ENCODE measurements at regions of chr17 and their contacts with region 1.

Region 1: DNA sequence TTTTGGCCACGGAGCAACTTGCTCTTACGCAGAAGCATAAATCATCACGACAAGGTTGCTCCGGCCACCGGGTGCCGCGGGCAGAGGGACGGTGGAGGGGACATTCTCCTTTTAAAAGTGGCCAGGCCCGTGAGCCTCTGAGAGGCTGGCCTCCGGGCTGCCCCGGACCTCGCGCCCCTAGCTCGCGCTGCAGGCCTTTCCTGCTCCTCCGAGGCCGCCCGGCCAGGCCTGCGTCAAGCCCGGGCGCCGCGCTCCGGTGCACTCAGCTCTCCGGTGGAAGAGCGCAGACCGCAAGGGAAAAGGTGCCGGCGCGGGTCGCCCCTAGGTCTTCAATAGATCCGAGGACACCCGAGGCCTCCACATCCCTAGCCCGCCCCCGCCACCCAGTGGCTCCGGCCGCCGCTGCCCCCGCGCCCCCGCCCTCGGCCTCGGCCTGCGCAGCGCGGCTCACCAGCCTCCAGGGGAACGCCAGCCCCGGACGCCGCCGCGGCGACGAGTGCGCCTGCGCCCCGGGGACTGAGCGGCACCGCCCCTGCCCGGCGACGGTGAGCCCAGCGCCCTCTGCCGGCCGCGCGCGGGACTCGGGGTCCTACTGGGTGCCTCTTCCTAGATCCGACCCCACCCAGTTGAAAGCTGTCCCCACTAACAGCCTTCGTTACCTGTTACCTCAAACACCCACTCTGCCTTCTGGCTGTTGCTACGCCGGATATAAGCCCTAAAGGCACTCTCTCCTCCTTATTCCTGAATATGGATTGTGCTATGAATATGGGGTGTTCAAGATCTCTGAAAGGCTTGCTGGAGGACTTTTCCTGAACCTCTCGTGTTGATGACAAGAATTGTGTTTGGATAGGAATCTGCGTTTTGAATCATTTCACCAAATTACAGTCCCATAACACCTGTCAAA is at the start of gene LYRM9:
- DNase-seq: peak; percentile 27
- H3K4me3 ChIP-seq: peak within 1 kb of the TSS; percentile 62
- H3K27me3 ChIP-seq: peaks cover 4% of the 10 kb centered on the region; the same call in 1 of the 2 replicates
- CTCF ChIP-seq: peak; percentile 78
- polyA plus RNA-seq, gene LYRM9: 6.5 and 7.0 TPM in 2 replicates

Region 2: GRCh38 chr17:27907976-27908558 is 14.9 kb after region 1 on chr17:
- CTCF ChIA-PET with region 1: interaction called, 14 read pairs
- POLR2A ChIA-PET with region 1: no interaction called
- DNase-seq: no peak
- H3K4me3 ChIP-seq: no peak overlapping the region
- H3K27me3 ChIP-seq: no peaks in the 10 kb centered on the region; the same call in 1 of the 2 replicates
- CTCF ChIP-seq: no peak

Region 3: DNA sequence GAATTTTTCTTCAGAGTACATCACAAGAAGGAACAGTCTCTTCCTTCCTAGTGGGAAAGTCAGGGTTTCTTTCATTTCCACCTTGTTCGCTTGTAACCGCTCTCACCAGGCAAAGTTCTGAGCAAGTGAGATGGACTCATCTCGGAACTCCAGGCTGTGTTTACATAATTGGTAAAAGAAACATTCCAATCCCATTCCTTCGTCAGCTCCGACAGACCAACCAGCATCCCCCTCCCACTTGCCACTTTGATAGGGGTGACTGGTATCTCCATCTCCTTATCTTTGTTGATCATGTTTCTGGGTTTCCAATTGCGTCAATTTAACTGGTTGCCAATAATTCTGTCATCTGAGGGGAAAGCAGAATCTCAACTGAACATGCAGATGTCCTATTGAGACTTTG is 36.9 kb after region 1 on chr17:
- CTCF ChIA-PET with region 1: no interaction called
- POLR2A ChIA-PET with region 1: no interaction called
- DNase-seq: no peak
- H3K4me3 ChIP-seq: no peak overlapping the region
- H3K27me3 ChIP-seq: no peaks in the 10 kb centered on the region; the same call in none of the 2 replicates
- CTCF ChIP-seq: no peak

Measured in BJ (cell line).